Activated CD4-positive, alpha-beta T cell treated with anti-CD3 and anti-CD28 coated beads, Interleukin-2, amount 10 ng/mL, durations not matched to agents 24 days and 14 days (primary cell): ENCODE measurements at regions of chr19 and their contacts with region 1.

Region 1: GRCh38 chr19:4400135-4400936 is at the start of gene SH3GL1:
- DNase-seq: peak; percentile 97
- H3K4me3 Mint-ChIP-seq: peak within 1 kb of the TSS; percentile 98
- H3K27ac Mint-ChIP-seq: peak within 1 kb of the TSS; percentile 96
- H3K4me1 Mint-ChIP-seq: peaks cover 53% of the 10 kb centered on the region
- H3K27me3 Mint-ChIP-seq: no peaks in the 10 kb centered on the region
- total RNA-seq, gene SH3GL1: 53.8 and 56.8 TPM in 2 replicates

Region 2: DNA sequence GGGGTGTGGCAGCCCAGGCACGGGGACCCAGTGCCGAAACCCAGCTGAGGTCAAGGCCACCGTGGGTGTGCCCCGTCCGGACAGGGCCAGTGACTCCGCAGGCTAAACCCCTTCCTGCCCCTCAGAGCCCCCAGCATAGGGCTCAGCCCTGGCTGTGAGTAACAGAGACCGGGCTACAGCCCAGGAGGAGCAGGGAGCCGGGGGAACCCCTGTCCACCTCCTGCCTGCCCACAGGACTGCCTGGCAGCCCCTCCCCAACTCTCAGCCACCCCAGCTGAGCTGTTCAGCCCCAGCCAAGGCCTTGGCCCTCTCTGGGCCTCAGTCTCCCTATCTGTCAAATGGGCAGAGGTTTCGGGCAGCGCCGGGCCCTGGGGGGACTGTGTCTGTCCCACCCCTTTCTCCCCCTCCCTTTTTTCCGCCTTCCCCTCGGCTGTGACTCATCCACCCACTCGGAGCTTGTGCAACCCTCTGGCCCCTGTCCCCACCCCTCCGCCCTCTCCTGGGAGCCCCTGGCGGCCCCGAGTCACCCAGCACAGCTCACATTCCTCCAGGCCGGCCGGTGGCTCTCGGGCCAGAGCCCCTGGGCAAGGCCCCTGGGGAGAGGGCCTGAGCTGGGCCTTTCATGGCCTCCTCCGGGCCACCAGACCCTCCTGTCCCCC is 342.2 kb before region 1 on chr19:
- intact Hi-C with region 1: no loop called
- DNase-seq: no peak
- H3K4me3 Mint-ChIP-seq: no peak overlapping the region
- H3K27ac Mint-ChIP-seq: no peak overlapping the region
- H3K4me1 Mint-ChIP-seq: peaks cover 16% of the 10 kb centered on the region
- H3K27me3 Mint-ChIP-seq: no peaks in the 10 kb centered on the region

Region 3: DNA sequence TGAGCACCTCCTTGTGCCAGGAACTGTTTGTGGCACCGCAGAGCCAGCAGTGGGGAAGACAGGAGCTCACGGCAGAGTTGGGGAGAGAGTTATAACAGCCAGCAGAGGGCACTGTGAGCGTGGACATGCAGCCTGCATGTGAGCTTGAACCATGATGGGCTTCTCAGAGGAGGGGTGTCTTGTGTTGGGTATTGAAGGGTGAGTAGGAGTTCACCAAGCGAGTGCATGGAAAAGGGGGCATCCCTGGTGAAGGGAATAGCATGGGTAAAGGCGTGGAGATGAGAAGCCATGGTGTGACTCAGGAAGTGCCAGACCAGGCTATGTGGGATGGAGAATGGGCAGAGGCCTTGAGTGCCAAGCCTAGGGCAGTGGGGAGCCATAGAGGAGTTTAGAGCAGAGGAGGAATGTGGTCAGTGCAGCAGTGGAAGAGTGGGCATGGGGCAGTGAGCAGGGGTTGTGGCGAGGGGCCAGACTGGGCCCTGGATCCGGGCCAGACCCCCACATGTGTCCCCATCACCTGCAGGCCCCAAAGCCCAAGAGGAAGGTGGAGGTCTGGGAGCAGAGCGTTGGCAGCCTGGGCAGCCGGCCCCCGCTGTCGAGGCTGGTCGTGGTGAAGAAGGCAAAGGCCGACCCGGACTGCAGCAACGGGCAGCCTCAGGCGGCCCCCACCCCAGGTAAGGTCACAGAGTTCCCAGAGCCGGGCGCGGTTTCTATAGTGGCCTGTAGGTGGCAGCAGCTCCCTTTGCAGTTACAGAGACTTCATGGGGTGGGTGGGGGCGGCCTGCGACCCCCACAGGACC is 133.0 kb before region 1 on chr19:
- intact Hi-C with region 1: loop called (anchors 1 kb)
- DNase-seq: peak; percentile 87
- H3K4me3 Mint-ChIP-seq: no peak overlapping the region
- H3K27ac Mint-ChIP-seq: peak overlapping the region; percentile 4
- H3K4me1 Mint-ChIP-seq: peaks cover 13% of the 10 kb centered on the region
- H3K27me3 Mint-ChIP-seq: no peaks in the 10 kb centered on the region

Region 4: DNA sequence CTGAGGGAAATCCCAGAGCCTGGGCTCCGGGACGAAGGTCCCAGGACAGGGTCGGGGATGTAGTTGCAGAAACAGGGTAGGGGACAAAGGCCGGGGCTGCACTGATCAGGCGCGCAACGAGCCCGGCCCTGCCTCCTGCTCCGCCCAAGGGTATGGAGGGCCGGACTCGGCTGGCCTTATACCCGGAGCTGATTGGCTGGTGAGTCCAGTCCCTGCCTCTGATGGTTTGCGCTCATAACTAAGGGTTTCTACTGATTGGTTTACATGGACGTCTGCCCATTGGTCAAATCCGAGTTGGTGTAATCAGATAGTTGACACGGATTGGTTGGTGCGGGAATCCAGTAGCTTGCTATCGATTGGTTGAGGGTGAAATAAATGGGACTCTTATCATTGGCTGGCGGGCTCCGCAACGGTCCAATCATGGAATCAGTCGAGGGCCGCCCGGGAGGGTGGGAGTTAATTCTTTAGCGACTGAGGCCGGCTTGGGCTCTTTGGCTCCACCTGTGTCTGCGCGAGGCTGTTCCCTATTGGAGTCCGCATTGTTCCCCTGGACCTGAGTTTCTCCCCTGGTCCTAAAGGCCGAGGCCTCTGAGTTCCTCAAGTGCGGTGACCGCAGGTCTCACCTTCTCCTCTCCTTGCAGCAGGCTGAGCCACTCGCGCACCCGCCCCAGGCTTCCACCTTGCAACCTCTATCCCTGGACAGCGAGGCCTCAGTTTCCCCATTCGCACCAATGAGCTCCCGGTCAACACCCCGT is 57.5 kb before region 1 on chr19:
- intact Hi-C with region 1: loop called (anchors 1 kb)
- DNase-seq: peak; percentile 98
- H3K4me3 Mint-ChIP-seq: peak overlapping the region; percentile 93
- H3K27ac Mint-ChIP-seq: peak overlapping the region; percentile 95
- H3K4me1 Mint-ChIP-seq: peaks cover 20% of the 10 kb centered on the region
- H3K27me3 Mint-ChIP-seq: no peaks in the 10 kb centered on the region

Region 5: DNA sequence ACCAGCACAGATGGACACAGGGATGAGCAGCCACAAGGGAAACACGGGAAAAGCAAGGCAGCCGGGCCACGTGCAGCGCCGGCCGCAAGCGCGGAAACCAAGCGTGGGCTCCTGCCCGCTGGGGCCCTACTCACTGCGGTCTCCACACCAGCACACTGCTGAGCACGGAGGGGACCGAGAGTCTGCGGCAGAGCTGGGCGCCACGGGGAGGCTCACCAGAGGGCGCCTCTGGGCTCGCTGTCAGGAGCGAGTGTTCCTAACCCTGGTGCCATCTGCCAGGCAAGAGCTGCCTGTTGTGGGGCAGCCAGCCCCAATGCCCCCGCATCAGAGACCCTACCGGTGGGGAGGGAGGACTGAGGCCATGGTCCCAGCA is 30.5 kb before region 1 on chr19:
- intact Hi-C with region 1: loop called (anchors 1 kb)
- DNase-seq: peak; percentile 91
- H3K4me3 Mint-ChIP-seq: peak overlapping the region; percentile 87
- H3K27ac Mint-ChIP-seq: peak overlapping the region; percentile 96
- H3K4me1 Mint-ChIP-seq: peaks cover 35% of the 10 kb centered on the region
- H3K27me3 Mint-ChIP-seq: no peaks in the 10 kb centered on the region

Region 6: DNA sequence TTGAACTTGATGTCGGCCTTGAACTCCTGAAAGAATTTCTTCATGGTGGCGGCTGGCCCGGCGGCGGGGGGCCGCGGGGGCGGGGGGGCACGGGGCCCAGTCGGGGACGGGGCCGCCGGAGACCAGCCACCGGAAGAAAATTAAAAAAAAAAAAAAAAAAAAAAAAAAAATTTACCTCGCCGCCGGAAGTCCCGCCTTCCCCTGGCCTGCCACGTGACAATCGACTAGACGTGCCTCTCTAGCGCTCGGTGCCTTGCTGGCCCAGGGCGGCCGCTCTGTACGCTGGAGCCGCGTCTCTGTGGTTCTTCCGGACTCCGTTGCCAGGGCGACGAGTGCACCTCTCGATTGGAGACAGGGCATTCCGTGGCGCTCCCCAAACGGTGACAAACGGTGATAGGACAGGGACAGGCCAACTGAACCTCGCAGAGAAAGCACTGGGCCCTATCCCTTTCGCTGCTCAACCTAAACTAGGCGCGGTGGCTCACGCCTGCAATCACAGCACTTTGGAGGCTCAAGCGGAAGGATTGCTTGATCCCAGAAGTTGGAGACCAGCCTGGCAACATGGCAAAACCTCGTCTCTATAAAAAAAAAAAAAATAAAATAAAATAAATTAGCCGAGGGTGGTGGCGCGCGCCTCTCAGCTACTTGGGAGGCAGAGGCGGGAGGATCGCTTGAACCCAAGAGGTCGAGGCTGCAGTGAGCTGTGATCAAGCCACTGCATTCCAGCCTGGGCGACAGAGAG is 57.5 kb after region 1 on chr19 and contains the start of gene UBXN6:
- intact Hi-C with region 1: loop called (anchors 1 kb)
- DNase-seq: peak; percentile 100
- H3K4me3 Mint-ChIP-seq: peak within 1 kb of the TSS; percentile 96
- H3K27ac Mint-ChIP-seq: peak within 1 kb of the TSS; percentile 92
- H3K4me1 Mint-ChIP-seq: peaks cover 16% of the 10 kb centered on the region
- H3K27me3 Mint-ChIP-seq: peaks cover 2% of the 10 kb centered on the region
- total RNA-seq, gene UBXN6: 41.2 and 47.2 TPM in 2 replicates

Region 7: GRCh38 chr19:4471403-4472173 is 71.3 kb after region 1 on chr19:
- intact Hi-C with region 1: loop called (anchors 5 kb)
- DNase-seq: peak; percentile 99
- H3K4me3 Mint-ChIP-seq: no peak overlapping the region
- H3K27ac Mint-ChIP-seq: no peak overlapping the region
- H3K4me1 Mint-ChIP-seq: peaks cover 22% of the 10 kb centered on the region
- H3K27me3 Mint-ChIP-seq: no peaks in the 10 kb centered on the region

Region 8: DNA sequence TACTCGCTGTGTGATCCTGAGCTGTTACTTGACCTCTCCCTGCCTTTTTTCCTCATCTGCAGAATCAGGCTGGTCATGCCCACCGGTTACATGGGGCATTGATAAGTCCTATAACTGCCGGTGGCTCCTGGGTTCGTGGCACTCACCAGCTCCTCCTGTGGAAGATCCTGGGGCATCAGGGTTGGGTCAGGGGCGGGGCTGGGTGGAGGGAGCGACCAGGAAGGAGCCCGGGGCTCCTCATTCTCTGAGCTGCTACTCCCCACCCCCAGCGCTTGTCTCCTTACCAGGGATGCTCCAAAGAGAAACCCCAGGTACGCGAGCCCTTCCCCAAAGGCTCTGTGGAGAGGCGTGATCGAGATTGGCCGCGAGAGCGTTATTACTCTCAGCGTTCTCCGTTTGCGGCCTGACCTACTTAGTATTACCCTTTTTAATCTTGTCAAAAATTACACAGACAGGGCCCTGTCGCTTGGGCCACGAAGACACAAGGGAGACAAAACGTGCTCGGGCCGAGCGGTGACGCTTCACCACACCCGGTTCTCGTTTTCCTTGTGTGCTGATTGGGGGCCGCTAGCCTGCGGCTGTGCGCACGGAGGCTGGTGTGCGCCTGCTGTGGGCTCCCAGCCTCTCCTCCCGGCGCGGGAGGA is 82.5 kb after region 1 on chr19:
- intact Hi-C with region 1: no loop called
- DNase-seq: no peak
- H3K4me3 Mint-ChIP-seq: no peak overlapping the region
- H3K27ac Mint-ChIP-seq: no peak overlapping the region
- H3K4me1 Mint-ChIP-seq: peaks cover 2% of the 10 kb centered on the region
- H3K27me3 Mint-ChIP-seq: no peaks in the 10 kb centered on the region

Region 9: GRCh38 chr19:4889034-4889815 is 488.9 kb after region 1 on chr19:
- intact Hi-C with region 1: no loop called
- DNase-seq: no peak
- H3K4me3 Mint-ChIP-seq: no peak overlapping the region
- H3K27ac Mint-ChIP-seq: no peak overlapping the region
- H3K4me1 Mint-ChIP-seq: no peaks in the 10 kb centered on the region
- H3K27me3 Mint-ChIP-seq: no peaks in the 10 kb centered on the region